PC-3 (cell line): ENCODE measurements at regions of chr5 and their contacts with region 1.

Region 1: DNA sequence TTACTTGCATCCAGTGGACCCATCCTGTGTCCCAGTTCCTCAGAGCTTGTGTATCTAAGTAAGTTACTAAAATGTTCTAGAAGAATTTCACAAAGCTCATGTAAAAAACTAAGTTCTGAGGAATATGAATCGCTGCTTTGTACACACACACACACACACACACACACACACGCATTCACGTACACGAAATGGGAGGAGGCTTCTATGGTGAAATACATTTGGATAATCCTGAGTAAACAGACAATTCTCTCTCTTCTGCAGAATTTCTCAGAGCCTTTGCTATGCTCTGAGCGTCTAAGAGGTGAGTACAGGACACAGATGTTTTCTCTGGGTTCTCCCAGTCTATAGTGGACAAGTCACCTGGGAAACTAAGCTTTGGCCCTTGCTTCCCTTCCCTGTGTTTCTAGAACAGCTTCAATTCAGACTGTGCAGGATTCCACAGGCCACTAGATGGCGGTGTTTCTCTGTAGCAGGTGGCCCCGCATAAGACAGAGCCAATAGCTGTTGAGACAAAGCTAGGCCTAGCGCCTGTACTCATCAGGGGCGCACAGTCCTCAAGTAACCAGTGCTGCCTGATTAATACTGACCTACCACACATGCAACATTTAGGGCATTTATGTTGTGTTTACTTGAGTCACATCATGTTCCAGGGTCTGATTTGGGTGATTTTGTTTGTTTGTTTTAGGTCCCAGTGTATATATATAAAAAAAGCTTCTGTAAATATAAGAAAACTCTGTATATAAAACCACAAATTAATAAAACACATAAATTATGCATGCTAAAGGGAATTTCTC is 114.8 kb downstream of the LIFR start:
- DNase-seq: peak; percentile 98
- ATAC-seq: peak; percentile 99
- H3K4me3 ChIP-seq: no peak overlapping the region
- H3K27ac ChIP-seq: no peak overlapping the region
- H3K4me1 ChIP-seq: no peaks in the 10 kb centered on the region
- H3K27me3 ChIP-seq: no peaks in the 10 kb centered on the region
- CTCF ChIP-seq: peak; percentile 99

Region 2: DNA sequence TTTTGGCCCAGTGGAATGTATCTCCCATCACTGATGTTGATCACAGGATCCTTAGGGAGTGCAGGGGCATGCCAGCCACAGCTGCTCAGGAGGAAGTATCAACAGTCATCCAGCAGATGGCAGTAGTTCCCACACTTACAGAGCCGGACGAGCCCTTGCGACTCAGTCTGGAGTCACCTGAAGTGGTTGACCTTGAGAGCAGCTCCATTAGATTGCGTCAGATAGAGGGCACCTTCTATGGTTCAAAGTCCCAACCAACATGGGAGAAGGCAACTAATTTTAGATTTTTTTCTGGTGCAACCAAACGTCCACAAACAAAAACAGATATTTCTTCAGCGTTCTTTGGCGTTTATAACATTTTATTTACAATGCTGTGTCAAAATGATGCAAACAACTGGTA is 58.8 kb before region 1 on chr5:
- CTCF ChIA-PET with region 1: interaction called, 11 read pairs
- POLR2A ChIA-PET with region 1: no interaction called
- intact Hi-C with region 1: no loop called
- DNase-seq: peak; percentile 92
- ATAC-seq: peak; percentile 86
- H3K4me3 ChIP-seq: no peak overlapping the region
- H3K27ac ChIP-seq: no peak overlapping the region
- H3K4me1 ChIP-seq: peaks cover 22% of the 10 kb centered on the region
- H3K27me3 ChIP-seq: no peaks in the 10 kb centered on the region
- CTCF ChIP-seq: peak; percentile 97

Region 3: DNA sequence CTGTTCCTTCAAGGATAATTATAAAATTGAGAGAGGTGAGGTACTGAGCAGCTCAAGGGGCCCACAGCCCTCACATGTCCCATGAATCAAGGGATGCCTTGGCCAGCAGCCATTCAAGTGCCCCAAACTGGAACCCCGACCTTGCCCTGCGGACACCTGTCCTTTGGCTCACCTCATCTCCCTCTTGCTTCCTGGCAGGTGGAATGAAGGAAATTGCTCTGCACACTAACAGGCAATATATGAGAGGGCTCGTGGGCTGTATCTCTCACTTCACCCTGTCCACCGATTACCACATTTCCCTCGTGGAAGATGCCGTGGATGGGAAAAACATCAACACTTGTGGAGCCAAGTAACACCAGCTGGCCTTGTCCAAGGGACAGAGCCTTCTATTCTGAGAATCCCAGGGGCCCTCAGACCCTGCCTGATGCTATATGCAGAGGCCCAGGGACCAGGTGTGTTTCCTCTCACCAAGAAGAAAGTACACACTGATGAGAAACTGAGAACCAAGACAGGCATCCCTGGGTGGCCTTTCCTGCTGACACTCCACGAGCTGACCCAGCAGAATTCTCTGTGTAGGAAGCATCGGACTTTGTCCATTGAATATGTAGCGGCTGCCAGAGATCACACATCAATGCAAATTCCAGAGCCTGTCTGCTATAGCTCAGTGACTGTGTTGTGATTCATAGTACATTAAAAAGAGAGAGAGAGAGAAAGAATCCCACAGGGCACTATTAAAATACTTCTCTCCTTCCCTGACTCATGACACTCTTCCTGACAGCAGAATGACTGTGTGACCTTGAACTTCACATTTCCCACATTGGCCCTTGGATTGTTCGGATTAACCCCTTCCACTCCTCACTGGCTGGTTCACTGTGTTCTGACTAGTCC is 22.2 kb after region 1 on chr5:
- CTCF ChIA-PET with region 1: interaction called, 12 read pairs
- POLR2A ChIA-PET with region 1: no interaction called
- intact Hi-C with region 1: no loop called
- DNase-seq: peak; percentile 96
- ATAC-seq: peak; percentile 73
- H3K4me3 ChIP-seq: peak overlapping the region; percentile 14
- H3K27ac ChIP-seq: peak overlapping the region; percentile 66
- H3K4me1 ChIP-seq: peaks cover 53% of the 10 kb centered on the region
- H3K27me3 ChIP-seq: no peaks in the 10 kb centered on the region
- CTCF ChIP-seq: no peak

Region 4: DNA sequence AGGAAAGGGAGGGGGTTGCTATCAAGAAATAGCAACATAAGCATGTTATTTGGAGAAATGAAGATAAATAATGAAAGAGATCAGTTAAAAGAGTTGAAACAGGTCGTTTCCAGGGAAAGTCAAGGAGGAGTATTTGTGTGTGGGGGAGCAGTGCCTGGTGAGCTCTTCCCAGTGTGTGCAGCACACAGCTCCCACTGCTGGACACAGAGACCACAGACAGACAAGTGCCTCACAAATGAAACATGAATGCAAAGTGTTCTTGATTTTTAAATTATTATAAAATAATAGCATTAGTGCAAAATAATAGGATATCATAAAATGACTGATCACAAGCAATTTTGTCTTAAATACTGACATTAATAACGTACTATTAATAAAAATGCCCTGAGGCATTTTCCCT is 74.0 kb after region 1 on chr5:
- CTCF ChIA-PET with region 1: interaction called, 26 read pairs
- POLR2A ChIA-PET with region 1: no interaction called
- intact Hi-C with region 1: no loop called
- DNase-seq: peak; percentile 42
- ATAC-seq: peak; percentile 76
- H3K4me3 ChIP-seq: no peak overlapping the region
- H3K27ac ChIP-seq: no peak overlapping the region
- H3K4me1 ChIP-seq: no peaks in the 10 kb centered on the region
- H3K27me3 ChIP-seq: no peaks in the 10 kb centered on the region
- CTCF ChIP-seq: peak; percentile 66

Region 5: GRCh38 chr5:38660194-38660668 is 218.6 kb after region 1 on chr5:
- CTCF ChIA-PET with region 1: interaction called, 8 read pairs
- POLR2A ChIA-PET with region 1: no interaction called
- intact Hi-C with region 1: loop called (anchors 5 kb)
- DNase-seq: peak; percentile 98
- ATAC-seq: peak; percentile 100
- H3K4me3 ChIP-seq: peak overlapping the region; percentile 69
- H3K27ac ChIP-seq: peak overlapping the region; percentile 74
- H3K4me1 ChIP-seq: peaks cover 10% of the 10 kb centered on the region
- H3K27me3 ChIP-seq: no peaks in the 10 kb centered on the region
- CTCF ChIP-seq: no peak

Region 6: DNA sequence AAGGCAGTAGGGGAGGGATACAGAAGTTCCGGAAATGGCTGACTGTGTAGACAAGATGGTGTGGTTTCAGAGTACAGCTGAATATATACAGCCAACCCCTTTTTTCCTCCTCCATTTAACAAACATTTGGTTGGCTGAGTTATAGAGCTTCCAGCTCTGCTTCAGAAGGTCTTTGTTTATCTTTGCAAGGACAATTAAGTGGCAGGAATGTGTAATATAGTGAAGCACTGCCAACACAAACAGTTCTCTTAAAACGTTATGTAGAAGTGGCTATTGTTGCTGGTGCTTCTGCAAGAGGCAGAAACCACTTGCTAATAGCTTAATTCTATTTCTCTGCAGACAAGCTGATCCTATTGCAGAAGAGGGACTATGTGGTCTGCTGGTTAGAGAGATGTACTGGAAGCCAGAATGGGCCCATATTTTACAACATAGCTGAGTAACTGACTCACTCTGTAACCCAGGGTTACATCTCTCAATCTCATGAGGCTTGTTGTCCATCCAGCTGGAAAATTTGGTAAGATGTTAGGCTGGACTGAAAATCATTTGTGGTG is 341.4 kb after region 1 on chr5:
- CTCF ChIA-PET with region 1: interaction called, 16 read pairs
- POLR2A ChIA-PET with region 1: no interaction called
- intact Hi-C with region 1: no loop called
- DNase-seq: peak; percentile 96
- ATAC-seq: peak; percentile 87
- H3K4me3 ChIP-seq: no peak overlapping the region
- H3K27ac ChIP-seq: peak overlapping the region; percentile 65
- H3K4me1 ChIP-seq: peaks cover 41% of the 10 kb centered on the region
- H3K27me3 ChIP-seq: no peaks in the 10 kb centered on the region
- CTCF ChIP-seq: no peak